Ascending aorta (tissue), 2 donors: ENCODE measurements at regions of chr15 and their contacts with region 1.

Region 1: DNA sequence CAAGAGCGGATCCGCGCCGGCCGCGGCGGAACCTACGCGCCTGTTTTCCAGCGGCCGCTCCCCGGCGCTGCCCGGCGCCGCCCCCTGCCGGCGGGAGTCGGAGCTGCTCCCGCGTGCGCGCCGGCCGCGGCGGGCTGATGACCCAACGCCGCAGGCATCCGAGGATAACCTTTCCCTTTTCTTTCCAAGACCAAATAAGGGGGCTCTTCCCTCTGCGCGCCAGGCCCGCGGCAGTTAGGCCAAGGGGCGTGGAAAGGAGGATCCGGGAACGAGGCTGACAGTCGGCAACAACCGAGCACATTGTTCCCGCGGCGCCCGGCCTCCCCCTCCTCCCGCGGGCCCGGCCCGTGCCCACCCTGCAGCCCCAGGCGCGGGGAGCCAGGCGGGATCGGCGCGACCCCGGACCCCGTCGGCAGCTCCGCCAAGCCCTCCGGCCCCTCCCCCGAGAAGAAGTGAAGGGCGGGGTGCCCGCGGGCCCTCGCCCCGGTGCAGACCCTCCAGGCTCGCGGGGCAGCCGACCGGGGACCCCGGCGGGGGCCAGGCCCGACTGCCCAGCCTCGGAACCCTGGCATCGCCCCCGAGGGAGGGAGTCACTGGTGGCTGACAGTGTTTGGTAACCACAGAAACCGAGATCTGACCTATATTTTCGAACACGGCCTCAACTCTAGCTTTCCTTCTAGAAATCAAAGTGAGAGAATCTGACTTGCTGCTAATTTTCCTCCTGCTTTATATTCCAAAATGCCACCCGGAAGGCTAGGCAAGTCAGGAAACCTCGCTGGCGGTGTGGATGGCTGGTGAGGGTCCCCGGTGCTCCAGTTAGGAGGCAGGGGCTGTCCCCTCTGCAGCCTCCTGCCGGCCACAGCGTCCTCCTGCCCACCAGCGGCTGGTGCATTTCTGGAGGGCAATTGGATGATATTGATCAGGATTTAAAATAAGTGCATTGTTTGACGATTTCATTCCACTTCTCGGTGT is 45.6 kb upstream of the SYNM start:
- DNase-seq: peak; percentile 58 to 93
- H3K4me3 ChIP-seq: peak overlapping the region; percentile 68 to 83
- H3K27ac ChIP-seq: peak overlapping the region; percentile 87 to 88
- H3K4me1 ChIP-seq: peaks cover 6 to 8% of the 10 kb centered on the region in 2 donors
- H3K27me3 ChIP-seq: no peaks in the 10 kb centered on the region
- CTCF ChIP-seq: peak; percentile 31 to 91 (median 59)

Region 2: GRCh38 chr15:98525661-98526001 is 533.7 kb before region 1 on chr15:
- intact Hi-C with region 1: loop called (anchors 5 kb)
- DNase-seq: no peak
- H3K4me3 ChIP-seq: peak overlapping the region; percentile 14 to 31
- H3K27ac ChIP-seq: peak overlapping the region; percentile 81 to 85
- H3K4me1 ChIP-seq: peaks cover 10 to 18% of the 10 kb centered on the region in 2 donors
- H3K27me3 ChIP-seq: no peaks in the 10 kb centered on the region
- CTCF ChIP-seq: no peak

Region 3: GRCh38 chr15:98779463-98780071 is 279.7 kb before region 1 on chr15:
- intact Hi-C with region 1: loop called (anchors 5 kb)
- DNase-seq: peak in 1 of 2 donors; percentile 81
- H3K4me3 ChIP-seq: no peak overlapping the region
- H3K27ac ChIP-seq: peak overlapping the region; percentile 9 to 42
- H3K4me1 ChIP-seq: peaks cover 6 to 36% of the 10 kb centered on the region in 2 donors
- H3K27me3 ChIP-seq: no peaks in the 10 kb centered on the region
- CTCF ChIP-seq: peak; percentile 77 to 89 (median 87)

Region 4: DNA sequence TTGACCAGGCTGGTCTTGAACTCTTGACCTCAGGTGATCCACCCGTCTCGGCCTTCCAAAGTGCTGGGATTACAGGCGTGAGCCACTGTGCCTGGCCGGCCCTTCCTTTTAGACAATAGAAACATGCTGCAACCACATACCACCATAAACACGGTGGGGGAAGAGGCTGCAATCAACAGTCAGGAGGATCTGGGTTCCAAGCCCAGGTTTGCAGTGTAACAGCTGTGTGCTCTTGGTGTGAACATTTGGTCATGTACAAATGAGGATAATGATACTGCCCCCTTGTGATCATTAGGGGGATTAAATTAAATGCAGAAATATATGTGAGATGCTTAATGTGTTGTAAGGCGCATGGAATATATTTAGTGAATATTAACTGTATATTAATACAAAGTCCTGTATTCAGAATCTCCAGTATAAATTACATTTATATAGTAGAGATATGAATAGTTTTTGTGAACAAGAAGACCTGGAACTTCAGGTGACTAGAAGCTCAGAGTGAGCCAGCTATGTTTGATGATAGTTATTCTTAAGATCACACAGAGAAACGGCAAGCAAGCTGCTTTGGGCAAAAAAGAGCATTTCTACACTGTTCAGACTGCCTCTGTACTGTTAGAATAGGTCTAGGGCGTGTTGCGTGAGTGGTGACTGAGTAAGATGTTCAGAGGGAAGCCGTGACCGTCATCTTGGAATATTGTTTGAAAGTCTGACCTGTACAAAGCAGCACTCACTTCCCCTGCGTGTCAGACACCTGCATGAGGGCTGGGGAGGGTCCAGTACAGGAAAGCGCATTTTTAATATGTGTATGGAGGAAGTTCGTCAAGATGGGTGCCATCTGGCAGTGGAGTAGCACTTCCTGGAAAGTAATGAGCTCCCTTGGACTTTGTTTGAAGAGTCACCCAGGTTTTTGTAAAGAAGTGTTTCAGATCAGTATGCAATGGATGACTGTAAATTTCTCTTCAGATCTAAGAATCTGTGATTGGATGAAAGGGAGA is 177.5 kb before region 1 on chr15:
- intact Hi-C with region 1: loop called (anchors 5 kb)
- DNase-seq: no peak
- H3K4me3 ChIP-seq: no peak overlapping the region
- H3K27ac ChIP-seq: peak overlapping the region; percentile 76 to 86
- H3K4me1 ChIP-seq: peaks cover 20 to 60% of the 10 kb centered on the region in 2 donors
- H3K27me3 ChIP-seq: no peaks in the 10 kb centered on the region
- CTCF ChIP-seq: peak; percentile 38 to 60 (median 38)

Region 5: DNA sequence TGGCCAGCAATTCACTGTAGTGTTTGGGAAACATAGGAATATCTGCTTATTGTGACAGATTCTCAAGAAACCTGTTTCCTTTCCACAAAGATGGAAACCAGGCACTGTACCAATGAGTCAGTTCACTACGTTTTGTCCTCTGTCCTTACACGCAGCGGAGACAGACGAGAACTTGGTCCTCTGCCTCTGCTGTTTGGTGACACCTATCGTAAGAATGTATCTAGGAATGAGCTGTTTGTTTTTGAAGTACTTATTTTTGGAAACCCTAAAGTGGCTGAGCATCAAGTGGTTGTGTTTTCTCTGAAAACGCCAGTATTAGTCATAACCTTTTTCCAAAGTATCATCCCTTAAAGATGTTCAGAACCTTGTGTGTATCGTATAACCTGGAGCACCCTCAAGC is 144.7 kb before region 1 on chr15:
- intact Hi-C with region 1: loop called (anchors 5 kb)
- DNase-seq: peak in 1 of 2 donors; percentile 86
- H3K4me3 ChIP-seq: no peak overlapping the region
- H3K27ac ChIP-seq: peak overlapping the region; percentile 78 to 79
- H3K4me1 ChIP-seq: peaks cover 8 to 30% of the 10 kb centered on the region in 2 donors
- H3K27me3 ChIP-seq: no peaks in the 10 kb centered on the region
- CTCF ChIP-seq: no peak

Region 6: GRCh38 chr15:98954411-98954810 is 104.9 kb before region 1 on chr15:
- intact Hi-C with region 1: loop called (anchors 2 kb)
- DNase-seq: peak; percentile 84 to 97
- H3K4me3 ChIP-seq: no peak overlapping the region
- H3K27ac ChIP-seq: peak overlapping the region; percentile 95 to 98
- H3K4me1 ChIP-seq: peaks cover 20 to 48% of the 10 kb centered on the region in 2 donors
- H3K27me3 ChIP-seq: no peaks in the 10 kb centered on the region
- CTCF ChIP-seq: no peak

Region 7: DNA sequence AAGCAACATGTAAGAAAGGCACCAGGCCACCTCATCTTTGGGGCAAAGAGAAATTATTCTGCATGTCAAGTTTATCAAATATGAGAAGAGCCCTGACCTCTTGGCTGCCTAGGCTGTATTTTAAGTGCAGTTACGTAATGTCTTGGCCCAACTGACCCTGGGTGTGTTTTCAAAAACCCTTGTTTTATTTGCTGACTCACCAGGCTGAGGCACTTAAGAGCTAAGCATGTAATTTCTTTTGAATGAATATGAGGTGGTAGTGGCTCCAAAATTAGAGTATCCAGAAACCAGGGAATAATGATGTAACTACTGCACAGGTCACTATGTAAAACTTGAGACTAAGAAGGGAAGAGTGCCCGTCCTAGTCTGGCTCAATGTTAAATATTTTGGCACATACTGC is 76.0 kb before region 1 on chr15:
- intact Hi-C with region 1: loop called (anchors 2 kb)
- DNase-seq: peak in 1 of 2 donors; percentile 87
- H3K4me3 ChIP-seq: no peak overlapping the region
- H3K27ac ChIP-seq: peak overlapping the region; percentile 75 to 87
- H3K4me1 ChIP-seq: peaks cover 9 to 23% of the 10 kb centered on the region in 2 donors
- H3K27me3 ChIP-seq: no peaks in the 10 kb centered on the region
- CTCF ChIP-seq: no peak

Region 8: GRCh38 chr15:99123706-99124451 is 64.6 kb after region 1 on chr15:
- intact Hi-C with region 1: no loop called
- DNase-seq: peak; percentile 64 to 96
- H3K4me3 ChIP-seq: peak overlapping the region; percentile 11 to 59
- H3K27ac ChIP-seq: peak overlapping the region; percentile 97 to 98
- H3K4me1 ChIP-seq: peaks cover 27 to 46% of the 10 kb centered on the region in 2 donors
- H3K27me3 ChIP-seq: no peaks in the 10 kb centered on the region
- CTCF ChIP-seq: no peak

Region 9: GRCh38 chr15:99944131-99944530 is 884.8 kb after region 1 on chr15:
- intact Hi-C with region 1: no loop called
- DNase-seq: no peak
- H3K4me3 ChIP-seq: no peak overlapping the region
- H3K27ac ChIP-seq: no peak overlapping the region
- H3K4me1 ChIP-seq: no peaks in the 10 kb centered on the region
- H3K27me3 ChIP-seq: no peaks in the 10 kb centered on the region
- CTCF ChIP-seq: no peak